CD14-positive monocyte (primary cell): ENCODE measurements at regions of chr12 and their contacts with region 1.

Region 1: DNA sequence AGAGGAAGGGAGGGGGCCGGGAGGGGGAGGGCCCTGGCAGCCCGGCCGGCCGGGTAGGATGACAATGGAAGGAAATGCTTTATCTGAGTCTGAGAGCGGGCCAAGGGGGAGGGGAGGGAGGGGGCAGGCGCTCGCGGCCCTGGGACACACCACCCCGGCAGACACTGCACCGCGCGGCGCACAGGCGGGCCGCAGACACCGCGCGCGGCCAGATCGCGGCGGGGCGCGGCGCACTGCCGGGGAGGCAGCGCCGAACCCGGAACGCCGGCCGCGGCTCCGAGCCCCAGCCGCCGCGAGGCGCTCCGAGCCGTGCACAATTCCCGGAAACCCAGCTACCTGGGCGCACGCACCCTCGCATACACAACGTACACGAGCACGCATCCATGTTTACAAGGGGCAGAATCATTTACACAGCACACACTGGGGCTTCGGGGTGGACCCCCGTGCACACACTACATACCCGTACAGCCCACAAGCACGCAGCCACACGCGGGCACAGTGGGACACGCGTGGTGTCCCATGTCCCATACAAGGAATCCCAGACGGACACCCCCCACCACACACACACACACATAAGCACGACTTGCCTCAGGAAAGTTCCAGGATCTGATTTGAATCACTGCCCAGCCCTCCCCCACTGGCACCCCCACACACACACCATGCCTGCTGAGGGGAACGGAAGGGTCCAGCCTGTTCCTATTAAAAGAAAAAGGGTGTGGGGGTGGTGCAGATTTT is at the start of gene HDAC7:
- DNase-seq: peak in 2 of 3 donors; percentile 56 to 63
- H3K4me3 ChIP-seq: peak within 1 kb of the TSS; percentile 71 to 84 (median 82)
- H3K4me3 Mint-ChIP-seq: peak within 1 kb of the TSS; percentile 89 to 96
- H3K27ac ChIP-seq: peak within 1 kb of the TSS; percentile 70 to 86
- H3K27ac Mint-ChIP-seq: peak within 1 kb of the TSS; percentile 83 to 97 (median 95)
- H3K4me1 ChIP-seq: peaks cover 83 to 85% of the 10 kb centered on the region in 2 donors
- H3K4me1 Mint-ChIP-seq: peaks cover 84% of the 10 kb centered on the region
- H3K27me3 ChIP-seq: no peaks in the 10 kb centered on the region
- H3K27me3 Mint-ChIP-seq: peaks cover 0 to 2% (median 0%) of the 10 kb centered on the region in 3 donors
- CTCF ChIP-seq: no peak
- polyA plus RNA-seq, gene HDAC7: 5.9 to 79.2 (median 8.4) TPM

Region 2: DNA sequence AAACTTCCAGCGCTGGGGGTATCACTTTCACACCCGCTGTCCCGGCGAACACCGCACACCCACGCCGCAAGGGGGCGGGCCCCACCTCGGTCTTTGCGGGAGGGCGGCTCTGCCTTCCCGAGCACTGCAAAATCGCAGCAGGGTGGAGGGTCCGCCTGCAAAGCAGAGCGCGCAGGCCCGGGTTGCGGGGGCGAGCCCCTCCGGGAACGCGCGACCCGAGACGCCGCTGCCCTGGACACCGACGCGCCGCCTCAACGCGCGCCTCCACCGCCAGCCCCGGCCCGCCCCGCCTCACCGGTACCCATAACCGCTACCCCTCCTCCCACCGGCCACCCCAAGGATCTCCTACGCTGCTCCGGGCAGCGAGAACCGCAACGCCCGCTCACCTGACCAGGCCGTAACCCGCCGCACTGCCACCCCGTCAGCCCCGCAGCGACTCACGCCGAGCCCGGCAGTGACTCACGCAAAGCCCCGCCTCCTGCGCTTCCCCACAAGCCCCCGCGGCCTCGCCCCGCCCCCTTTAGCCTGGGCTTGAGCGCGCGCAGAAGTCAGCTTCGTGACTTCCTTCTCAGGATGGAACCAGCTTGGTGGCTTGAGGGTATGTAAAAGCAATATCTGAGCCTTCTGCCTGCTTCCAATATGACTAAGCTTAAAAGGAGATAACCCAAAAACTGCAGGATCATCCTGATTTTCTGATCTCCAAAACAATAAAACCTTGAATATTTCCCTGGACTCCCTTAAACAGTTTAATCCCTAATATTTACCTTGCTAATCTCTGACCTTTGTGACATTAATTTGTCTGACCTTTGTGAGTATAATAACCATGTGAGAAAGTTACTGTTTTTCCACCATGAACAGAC is 114.3 kb before region 1 on chr12 and contains the start of gene RPAP3:
- intact Hi-C with region 1: loop called in 1 of 2 experiments (anchors 5 kb)
- DNase-seq: peak; percentile 92 to 97 (median 96)
- H3K4me3 ChIP-seq: peak within 1 kb of the TSS; percentile 78 to 99 (median 88)
- H3K4me3 Mint-ChIP-seq: peak within 1 kb of the TSS; percentile 90 to 97
- H3K27ac ChIP-seq: peak within 1 kb of the TSS; percentile 39 to 95
- H3K27ac Mint-ChIP-seq: peak within 1 kb of the TSS; percentile 96 to 99 (median 97)
- H3K4me1 ChIP-seq: peaks cover 47 to 58% of the 10 kb centered on the region in 2 donors
- H3K4me1 Mint-ChIP-seq: peaks cover 61% of the 10 kb centered on the region
- H3K27me3 ChIP-seq: no peaks in the 10 kb centered on the region
- H3K27me3 Mint-ChIP-seq: peaks cover 0 to 3% (median 2%) of the 10 kb centered on the region in 3 donors
- CTCF ChIP-seq: peak; percentile 87
- polyA plus RNA-seq, gene RPAP3: 9.6 to 20.6 (median 19.0) TPM